Activated CD8-positive, alpha-beta T cell treated with anti-CD3 and anti-CD28 coated beads for 36 hours (primary cell): ENCODE measurements at regions of chr10 and their contacts with region 1.

Region 1: GRCh38 chr10:77371848-77372799 is 265.5 kb downstream of the KCNMA1 start:
- DNase-seq: no peak
- ATAC-seq: no peak
- H3K4me3 Mint-ChIP-seq: no peak overlapping the region
- H3K27ac Mint-ChIP-seq: no peak overlapping the region
- H3K4me1 Mint-ChIP-seq: no peaks in the 10 kb centered on the region
- H3K27me3 Mint-ChIP-seq: no peaks in the 10 kb centered on the region
- CTCF ChIP-seq: no peak

Region 2: DNA sequence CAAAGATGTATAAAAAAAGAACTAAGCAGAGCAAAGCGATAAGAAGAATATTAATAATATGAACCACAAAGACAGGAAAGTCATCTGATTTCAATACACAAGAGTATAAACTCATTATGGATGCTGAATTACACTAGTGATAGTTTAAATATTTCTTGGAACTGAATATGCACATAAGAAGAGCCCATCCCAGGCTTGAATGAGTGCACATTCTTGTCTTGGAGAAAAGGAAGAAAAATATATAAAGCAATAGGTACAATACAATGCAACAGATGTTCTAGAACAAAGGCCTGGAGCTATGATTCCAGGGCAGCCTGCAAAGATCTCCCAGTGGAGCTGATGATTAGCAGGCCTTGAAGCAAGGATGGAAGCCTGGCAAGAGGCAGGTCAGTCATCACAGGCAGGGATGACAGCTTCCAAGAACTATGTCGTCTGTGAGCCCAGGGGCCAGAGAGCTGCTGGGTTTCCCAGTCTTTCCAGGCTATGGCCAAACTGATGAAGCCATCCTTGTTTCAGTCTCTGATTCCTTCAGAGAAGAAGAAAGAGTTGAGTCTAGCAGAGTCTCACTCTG is 12.1 kb before region 1 on chr10:
- CTCF ChIA-PET with region 1: interaction called, 3 read pairs
- POLR2A ChIA-PET with region 1: no interaction called
- intact Hi-C with region 1: loop called (anchors 1 kb)
- DNase-seq: no peak
- ATAC-seq: no peak
- H3K4me3 Mint-ChIP-seq: no peak overlapping the region
- H3K27ac Mint-ChIP-seq: no peak overlapping the region
- H3K4me1 Mint-ChIP-seq: no peaks in the 10 kb centered on the region
- H3K27me3 Mint-ChIP-seq: no peaks in the 10 kb centered on the region
- CTCF ChIP-seq: no peak